ENCODE measurements at regions of chr3 and their contacts with region 1.

Region 1: DNA sequence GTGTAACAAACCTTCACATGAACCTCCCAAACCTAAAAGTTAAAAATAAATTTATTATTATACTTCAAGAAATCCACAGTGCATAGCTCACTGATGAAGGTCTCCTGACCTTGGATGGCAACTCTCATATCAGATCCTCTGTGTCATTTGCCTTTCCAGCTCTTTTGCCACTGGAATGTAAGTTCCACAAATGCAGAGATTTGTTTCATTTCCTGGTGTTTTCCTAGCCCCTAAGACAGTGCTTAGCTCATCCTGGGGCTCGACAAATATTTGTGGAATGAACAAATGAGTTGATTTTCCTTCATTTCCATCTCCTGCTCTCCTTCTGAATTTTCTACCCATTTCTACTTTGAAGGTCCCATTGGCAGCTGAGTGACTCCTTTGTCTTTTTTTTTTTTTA is 56.0 kb downstream of the FRMD4B start:
- DNase-seq: no peak
- H3K27ac ChIP-seq: no peak overlapping the region
- CTCF ChIP-seq: no peak

Region 2: DNA sequence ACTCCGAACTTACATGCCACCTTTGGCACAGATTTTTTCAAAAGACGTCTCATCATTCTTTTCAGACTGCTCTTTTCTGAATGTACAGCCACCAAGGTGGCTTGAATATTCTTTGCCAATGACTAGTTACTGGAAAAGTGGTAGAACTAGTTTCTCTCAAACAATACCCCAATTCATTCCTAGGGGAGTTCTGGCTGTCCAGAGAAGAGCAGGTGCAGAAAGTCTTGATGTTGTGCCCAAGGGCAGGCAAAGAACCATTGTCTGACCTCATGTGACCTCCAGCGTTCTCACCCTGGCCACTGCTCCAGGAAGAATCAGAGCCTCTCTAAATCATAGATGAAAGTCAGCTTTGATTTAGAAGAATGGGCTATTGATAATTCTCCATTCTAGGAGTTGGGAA is 213.0 kb before region 1 on chr3:
- CTCF ChIA-PET with region 1: no interaction called
- POLR2A ChIA-PET with region 1: no interaction called
- DNase-seq: no peak
- H3K27ac ChIP-seq: no peak overlapping the region
- CTCF ChIP-seq: no peak

Region 3: GRCh38 chr3:69178838-69179739 is 150.8 kb before region 1 on chr3:
- CTCF ChIA-PET with region 1: no interaction called
- POLR2A ChIA-PET with region 1: no interaction called
- DNase-seq: no peak
- H3K27ac ChIP-seq: no peak overlapping the region
- CTCF ChIP-seq: no peak

Region 4: DNA sequence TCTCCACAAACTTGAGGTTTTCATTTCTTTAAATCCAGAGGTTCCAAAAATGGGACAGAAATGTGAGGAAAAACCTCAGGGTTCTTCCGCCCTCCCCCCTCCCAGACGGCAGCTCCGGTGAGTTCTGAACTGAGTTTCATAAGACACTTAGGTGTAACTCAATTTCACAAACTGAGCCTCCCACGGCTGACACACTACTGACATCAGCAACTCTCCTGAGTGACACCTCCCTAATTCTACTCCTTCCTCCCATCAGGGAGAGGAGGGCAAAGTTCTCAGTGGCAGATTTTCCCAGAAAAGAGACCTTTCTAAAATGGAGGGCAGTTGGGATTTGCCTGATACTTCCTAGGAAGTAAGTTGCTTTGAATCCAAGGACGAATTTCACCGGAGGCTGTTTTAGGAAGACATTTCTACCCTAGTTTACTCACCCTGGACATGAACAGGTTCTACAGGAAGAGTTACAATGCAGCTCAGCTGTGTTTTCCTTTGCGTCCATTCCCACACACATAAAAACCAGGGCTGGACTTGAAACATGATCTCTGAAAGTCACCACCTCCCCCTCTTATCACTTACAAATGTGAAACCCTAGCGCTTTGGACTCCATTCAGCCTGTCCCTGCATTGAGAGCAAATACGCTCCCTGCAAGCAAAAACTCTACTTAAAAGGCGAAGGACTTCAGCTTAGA is 129.4 kb before region 1 on chr3:
- CTCF ChIA-PET with region 1: no interaction called
- POLR2A ChIA-PET with region 1: no interaction called
- DNase-seq: peak; percentile 61
- H3K27ac ChIP-seq: no peak overlapping the region
- CTCF ChIP-seq: no peak

Region 5: DNA sequence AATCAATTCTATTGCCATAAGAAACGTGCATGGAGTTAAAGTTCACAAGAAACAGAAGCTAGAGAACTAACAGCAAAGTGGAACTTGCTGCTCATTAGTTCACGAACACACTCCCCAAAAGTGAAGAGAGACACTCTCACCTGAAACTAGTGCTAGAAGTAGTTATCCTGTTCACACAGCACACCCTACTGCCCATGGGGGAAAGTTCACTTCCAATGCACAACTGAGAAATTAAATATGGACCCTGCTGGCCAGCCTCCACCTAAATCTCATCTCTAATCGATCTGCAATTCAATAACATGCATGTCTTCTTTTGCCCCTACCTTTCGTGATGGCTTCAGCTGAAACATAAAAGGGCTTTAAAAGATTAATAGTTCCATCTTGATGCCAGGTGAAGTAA is 95.4 kb after region 1 on chr3:
- CTCF ChIA-PET with region 1: interaction called, 3 read pairs
- POLR2A ChIA-PET with region 1: interaction called, 22 read pairs
- DNase-seq: no peak
- H3K27ac ChIP-seq: no peak overlapping the region
- CTCF ChIP-seq: no peak; the same call in 1 of the 2 replicates

Measured in RWPE1 (cell line).